ENCODE measurements at regions of chr1 and their contacts with region 1.

Region 1: DNA sequence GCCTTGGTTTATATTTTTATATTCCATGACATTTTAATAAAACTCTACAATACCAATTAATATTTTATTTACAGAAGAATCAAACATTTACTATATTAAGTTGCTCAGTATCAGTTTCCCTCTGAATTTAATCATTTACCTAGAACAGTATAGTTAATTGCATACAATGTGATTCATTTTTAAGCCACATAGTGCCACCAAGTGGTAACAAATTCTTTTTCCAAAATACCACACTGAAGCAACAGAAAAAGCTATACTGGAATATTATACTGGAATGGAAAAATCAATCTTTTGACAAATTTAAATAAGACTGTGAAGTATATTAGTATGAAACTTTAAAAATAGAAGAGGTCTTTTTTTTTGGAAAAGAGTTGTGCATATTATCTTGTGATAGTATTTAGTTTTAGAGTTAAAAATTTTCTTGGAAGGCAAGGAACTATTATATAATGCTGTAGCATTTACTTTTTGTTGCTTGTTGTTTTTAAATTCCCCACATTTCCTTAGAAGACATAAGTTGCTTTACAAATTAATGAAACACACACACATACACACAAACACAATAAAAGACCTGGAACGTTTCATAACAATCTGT is 57.3 kb downstream of the ZNF644 start:
- DNase-seq: no peak
- ATAC-seq: peak in 1 of 4 donors; percentile 38
- H3K4me3 ChIP-seq: no peak overlapping the region
- H3K27ac ChIP-seq: no peak overlapping the region
- H3K4me1 ChIP-seq: peaks cover 0 to 13% (median 7%) of the 10 kb centered on the region in 12 donors
- H3K27me3 ChIP-seq: no peaks in the 10 kb centered on the region
- CTCF ChIP-seq: peak in 11 of 12 donors; percentile 19 to 60 (median 48)
- POLR2A ChIP-seq: no peak

Region 2: DNA sequence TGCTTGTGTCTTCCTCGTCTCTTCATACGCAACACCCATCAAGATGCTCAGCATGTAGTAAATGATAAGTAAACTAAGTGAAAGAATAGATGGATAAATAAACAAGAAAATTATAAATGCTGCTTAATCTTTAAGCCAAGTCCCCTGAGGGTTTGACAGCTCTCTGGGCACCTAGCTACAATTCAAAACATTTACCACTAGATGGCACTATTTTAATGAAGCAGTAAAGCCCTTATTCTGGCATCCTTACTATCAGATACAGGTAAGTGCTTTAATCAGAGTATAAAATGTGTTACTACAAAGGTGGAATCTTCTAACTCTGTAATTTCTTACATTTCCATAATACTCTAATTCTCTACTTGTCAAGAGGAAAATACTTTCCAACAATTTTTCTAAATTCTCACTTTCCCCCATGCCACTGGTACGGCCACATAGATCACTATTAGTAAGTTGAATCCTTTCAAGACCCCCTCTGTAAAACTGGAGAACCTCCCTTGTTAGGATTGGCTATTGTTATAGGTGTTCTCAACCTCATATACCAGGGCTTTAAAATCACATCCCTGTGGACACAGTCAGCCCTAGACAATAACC is 385.2 kb before region 1 on chr1:
- intact Hi-C with region 1: loop called in 5 of 10 experiments (anchors 5 to 10 kb)
- DNase-seq: no peak
- ATAC-seq: no peak
- H3K4me3 ChIP-seq: no peak overlapping the region
- H3K27ac ChIP-seq: no peak overlapping the region
- H3K4me1 ChIP-seq: no peaks in the 10 kb centered on the region
- H3K27me3 ChIP-seq: peaks cover 0 to 41% (median 3%) of the 10 kb centered on the region in 9 donors
- CTCF ChIP-seq: peak; percentile 42 to 75 (median 67)
- POLR2A ChIP-seq: no peak

Region 3: DNA sequence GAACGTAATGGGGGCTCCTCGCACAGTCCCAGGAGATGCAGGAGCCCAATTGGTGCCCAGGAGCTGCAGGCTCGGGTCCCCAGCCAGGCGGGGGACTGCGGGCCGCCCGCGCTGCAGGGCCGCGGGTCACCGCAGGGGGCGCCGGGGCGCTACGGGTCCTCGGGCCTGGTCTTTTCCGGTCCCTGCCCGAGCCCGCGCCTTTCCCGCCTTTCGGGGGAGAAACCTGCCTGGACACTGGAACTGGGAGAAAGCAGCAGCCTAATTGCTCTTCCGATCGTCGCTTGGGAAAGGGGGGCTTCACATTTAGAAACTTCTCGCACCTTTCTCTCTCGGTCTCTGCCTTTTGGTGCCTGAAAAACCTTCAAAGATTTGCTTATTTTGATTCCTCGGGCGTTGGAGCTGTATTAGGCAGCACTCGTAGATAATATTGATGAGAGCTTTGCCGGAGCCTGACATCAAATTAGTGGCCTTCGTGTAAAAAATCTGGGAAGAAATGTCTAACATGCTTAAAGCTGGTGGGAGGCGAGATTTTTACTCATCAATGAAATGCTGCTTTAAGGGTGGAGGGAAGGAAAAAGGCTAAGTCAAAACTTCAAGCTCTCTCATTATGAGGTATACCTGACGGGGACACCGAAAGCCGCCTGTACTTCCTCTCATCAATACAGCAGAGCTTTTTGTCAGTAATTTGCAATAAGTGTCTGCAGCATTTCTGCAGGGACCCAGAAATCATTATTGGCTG is 234.9 kb before region 1 on chr1:
- intact Hi-C with region 1: loop called in 9 of 10 experiments (anchors 5 to 10 kb)
- DNase-seq: no peak
- ATAC-seq: no peak
- H3K4me3 ChIP-seq: peak overlapping the region in 1 of 12 donors; percentile 22
- H3K27ac ChIP-seq: no peak overlapping the region
- H3K4me1 ChIP-seq: peaks cover 5 to 42% (median 18%) of the 10 kb centered on the region in 12 donors
- H3K27me3 ChIP-seq: peaks cover 47 to 100% (median 95%) of the 10 kb centered on the region in 9 donors
- CTCF ChIP-seq: peak in 5 of 12 donors; percentile 18 to 37 (median 23)
- POLR2A ChIP-seq: no peak

Region 4: GRCh38 chr1:90850898-90851710 is 113.4 kb before region 1 on chr1:
- intact Hi-C with region 1: loop called in 1 of 10 experiments (anchors 10 kb)
- DNase-seq: peak; percentile 83 to 90 (median 85)
- ATAC-seq: peak; percentile 92 to 100 (median 98)
- H3K4me3 ChIP-seq: peak overlapping the region; percentile 57 to 96 (median 83)
- H3K27ac ChIP-seq: peak overlapping the region in 9 of 12 donors; percentile 2 to 76 (median 60)
- H3K4me1 ChIP-seq: peaks cover 0 to 13% (median 0%) of the 10 kb centered on the region in 12 donors
- H3K27me3 ChIP-seq: peaks cover 0 to 10% (median 0%) of the 10 kb centered on the region in 9 donors
- CTCF ChIP-seq: peak; percentile 60 to 94 (median 88)
- POLR2A ChIP-seq: peak in 1 of 2 donors; percentile 41

Region 5: DNA sequence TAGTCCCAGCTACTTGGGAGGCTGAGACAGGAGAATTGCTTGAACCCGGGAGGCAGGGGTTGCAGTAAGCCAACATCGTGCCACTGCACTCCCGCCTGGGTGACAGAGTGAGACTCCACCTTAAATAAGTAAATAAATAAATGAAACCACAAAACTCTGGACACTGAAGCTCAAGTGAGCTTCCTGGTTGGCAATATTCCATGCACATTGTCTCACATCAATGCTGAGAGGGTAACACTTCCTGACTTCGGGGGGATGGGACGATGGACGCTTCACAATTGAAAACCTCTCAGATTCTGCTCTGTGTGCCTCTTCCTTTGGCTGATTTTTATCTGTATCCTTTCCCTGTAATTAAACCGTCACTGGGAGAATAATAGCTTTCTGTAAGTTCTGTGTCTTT is 127.3 kb after region 1 on chr1:
- intact Hi-C with region 1: no loop called
- DNase-seq: peak in 1 of 5 donors; percentile 11
- ATAC-seq: peak in 1 of 4 donors; percentile 47
- H3K4me3 ChIP-seq: no peak overlapping the region
- H3K27ac ChIP-seq: peak overlapping the region in 3 of 12 donors; percentile 26 to 49 (median 45)
- H3K4me1 ChIP-seq: peaks cover 0 to 5% (median 0%) of the 10 kb centered on the region in 12 donors
- H3K27me3 ChIP-seq: no peaks in the 10 kb centered on the region
- CTCF ChIP-seq: no peak
- POLR2A ChIP-seq: no peak